ENCODE measurements at regions of chr1 and their contacts with region 1.

Region 1: GRCh38 chr1:9455487-9456234 is 83.6 kb upstream of the SLC25A33 start:
- DNase-seq: peak; percentile 61
- ATAC-seq: peak; percentile 89
- H3K4me3 ChIP-seq: no peak overlapping the region
- H3K27ac ChIP-seq: no peak overlapping the region
- H3K4me1 ChIP-seq: peaks cover 45% of the 10 kb centered on the region
- H3K27me3 ChIP-seq: peaks cover 0 to 12% of the 10 kb centered on the region in 2 experiments; a peak in 1 of 5 replicates
- CTCF ChIP-seq: peak; percentile 94
- EP300 ChIP-seq: no peak
- POLR2A ChIP-seq: no peak
- RAD21 ChIP-seq: peak; percentile 96

Region 2: DNA sequence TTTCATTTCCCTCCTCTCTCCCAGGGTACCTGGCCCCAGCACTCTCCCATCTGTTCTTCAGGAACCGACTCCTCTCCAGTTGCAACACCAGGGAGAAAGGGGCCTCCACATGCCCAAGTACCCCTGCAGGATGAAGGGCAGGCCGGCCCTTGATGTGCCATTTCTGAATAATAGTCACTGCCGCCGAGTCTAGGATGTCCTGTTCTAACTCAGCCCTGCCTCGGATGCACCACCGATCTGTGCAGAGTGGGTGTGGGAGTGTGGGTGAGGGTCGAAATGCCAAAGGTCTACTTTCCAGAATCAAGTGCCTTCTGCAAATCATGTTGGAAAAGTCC is 188.3 kb before region 1 on chr1:
- CTCF ChIA-PET with region 1: interaction called, 28 read pairs
- POLR2A ChIA-PET with region 1: no interaction called
- in situ Hi-C with region 1: no loop called
- intact Hi-C with region 1: no loop called
- DNase-seq: no peak
- ATAC-seq: peak; percentile 14; the same call in 2 of the 3 replicates
- H3K4me3 ChIP-seq: no peak overlapping the region
- H3K27ac ChIP-seq: no peak overlapping the region
- H3K4me1 ChIP-seq: no peaks in the 10 kb centered on the region; the same call in 1 of the 2 replicates
- H3K27me3 ChIP-seq: no peaks in the 10 kb centered on the region
- CTCF ChIP-seq: no peak
- EP300 ChIP-seq: no peak
- POLR2A ChIP-seq: no peak
- RAD21 ChIP-seq: no peak